ENCODE measurements at regions of chr13 and their contacts with region 1.

Region 1: DNA sequence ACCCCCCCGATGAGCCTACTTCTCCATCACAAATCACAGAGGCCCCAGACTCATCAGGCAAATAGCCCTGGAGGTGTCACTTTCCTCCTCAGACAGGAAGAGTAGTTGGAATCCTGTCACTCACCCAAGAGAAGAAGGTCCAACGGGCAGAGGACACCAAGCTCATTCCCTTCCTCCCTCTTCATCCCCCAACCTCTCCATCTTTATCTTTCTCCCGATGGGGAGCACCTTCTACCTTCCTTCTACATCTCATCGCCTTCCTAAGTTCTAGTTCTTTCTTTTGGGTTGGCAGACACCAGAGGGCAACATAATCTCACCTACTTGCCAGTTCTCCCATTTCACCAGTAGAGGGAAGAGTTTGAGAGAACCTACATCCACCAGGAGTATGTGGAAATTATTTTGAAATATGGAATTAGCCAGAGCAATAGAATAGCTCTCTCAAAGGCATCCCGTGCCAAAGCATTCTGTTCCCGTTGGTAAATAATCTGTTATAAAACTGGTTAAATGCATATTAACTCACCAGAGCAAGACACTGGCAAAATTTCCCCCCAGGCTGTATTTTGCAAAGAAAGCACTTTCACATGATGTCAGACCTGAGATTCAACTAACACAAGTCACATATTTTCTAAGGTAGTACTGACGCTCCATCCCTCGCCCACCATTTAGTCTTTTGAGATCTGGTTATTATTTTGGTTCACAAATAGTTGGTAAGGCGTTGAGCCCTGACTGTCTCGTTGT is 55.0 kb downstream of the ZIC5 start:
- DNase-seq: peak; percentile 23
- H3K4me3 ChIP-seq: no peak overlapping the region
- CTCF ChIP-seq: peak; percentile 92

Region 2: GRCh38 chr13:99898421-99898820 is 18.1 kb before region 1 on chr13:
- CTCF ChIA-PET with region 1: interaction called, 11 read pairs
- POLR2A ChIA-PET with region 1: no interaction called
- DNase-seq: no peak
- H3K4me3 ChIP-seq: no peak overlapping the region
- CTCF ChIP-seq: no peak

Region 3: DNA sequence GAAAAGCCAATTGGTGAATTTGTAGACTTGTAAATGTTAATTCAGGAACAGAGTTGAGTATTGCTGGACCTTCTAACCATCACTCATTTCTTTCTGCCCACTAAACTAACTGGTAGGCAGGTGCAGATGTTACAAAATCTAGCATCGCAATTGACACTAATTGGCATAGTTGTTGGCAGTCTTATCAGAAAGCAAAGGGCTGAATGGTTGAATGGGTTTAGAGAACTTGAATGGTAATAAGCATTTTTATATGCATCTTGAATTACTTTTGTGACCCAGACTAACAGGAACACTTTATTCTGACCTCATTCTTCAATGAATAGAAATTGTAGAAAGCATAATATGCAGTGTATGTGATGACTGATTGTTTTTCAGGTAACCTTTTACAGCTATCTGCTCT is 482.9 kb after region 1 on chr13:
- CTCF ChIA-PET with region 1: no interaction called
- POLR2A ChIA-PET with region 1: no interaction called
- DNase-seq: no peak
- H3K4me3 ChIP-seq: no peak overlapping the region
- CTCF ChIP-seq: no peak

Region 4: DNA sequence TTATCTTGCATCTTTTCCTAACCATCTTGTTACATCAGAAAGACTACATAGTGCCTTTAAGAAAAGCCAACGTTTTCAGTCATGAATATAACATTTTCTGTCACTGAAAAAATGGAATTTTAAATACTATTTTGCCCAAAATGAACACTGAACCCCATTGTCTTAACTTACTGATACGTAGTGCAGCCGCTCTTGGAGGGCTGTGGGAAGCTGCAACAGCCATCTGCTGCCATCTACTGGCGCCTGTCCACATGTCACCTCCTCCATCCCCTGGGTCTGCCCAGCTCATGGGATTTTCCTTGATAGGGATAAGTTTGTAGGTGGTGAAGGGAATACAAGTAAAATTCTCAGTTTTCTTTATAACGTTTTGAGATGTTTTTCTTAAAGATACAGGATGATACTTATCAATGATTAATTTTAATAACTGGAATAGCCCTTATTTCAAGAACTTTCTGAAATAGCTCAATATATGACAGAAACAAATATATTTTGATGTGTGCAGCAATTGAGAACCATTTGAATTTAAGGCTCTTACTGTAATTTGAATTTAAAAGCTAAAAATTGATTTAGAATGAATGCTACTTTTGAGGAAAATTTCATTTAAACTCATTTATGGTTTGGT is 598.4 kb after region 1 on chr13:
- CTCF ChIA-PET with region 1: interaction called, 89 read pairs
- POLR2A ChIA-PET with region 1: no interaction called
- DNase-seq: no peak
- H3K4me3 ChIP-seq: no peak overlapping the region
- CTCF ChIP-seq: peak; percentile 92

Region 5: DNA sequence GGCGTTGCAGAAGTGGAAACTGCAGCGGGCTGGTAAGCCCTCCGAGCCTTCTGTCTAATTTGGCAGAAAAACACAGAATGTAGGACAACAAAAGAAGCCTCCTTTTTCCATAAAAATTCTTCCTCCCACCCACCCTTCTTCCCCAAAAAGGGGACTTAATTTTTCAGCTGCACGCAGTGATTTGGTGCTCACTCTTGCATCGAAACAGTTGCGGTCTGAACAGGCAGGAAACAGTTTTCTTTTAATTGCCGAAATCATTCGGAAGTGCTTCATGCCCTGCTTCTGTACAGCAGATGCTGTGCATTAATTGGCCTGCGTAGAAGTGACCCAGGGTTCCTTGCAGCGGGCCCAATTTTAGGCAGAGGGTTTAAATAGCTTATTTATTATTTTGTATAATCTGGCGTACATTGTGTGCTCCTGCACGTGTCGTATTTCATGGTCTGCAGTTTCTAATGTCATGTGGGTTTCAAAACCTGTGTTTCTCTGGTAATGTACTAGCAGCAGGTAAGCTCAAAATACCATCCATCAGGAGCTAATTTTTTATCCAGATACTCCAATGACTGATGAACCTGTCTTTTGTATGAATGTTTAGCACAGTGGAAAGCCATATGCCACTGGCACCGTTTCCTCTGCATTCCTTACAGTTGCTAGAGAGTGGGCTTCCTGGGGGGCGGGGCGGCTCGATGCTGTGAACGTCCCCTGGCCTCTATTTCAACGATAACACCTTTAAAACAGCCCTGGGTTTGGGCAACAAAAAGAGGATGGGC is 605.5 kb after region 1 on chr13:
- CTCF ChIA-PET with region 1: interaction called, 89 read pairs
- POLR2A ChIA-PET with region 1: no interaction called
- DNase-seq: no peak
- H3K4me3 ChIP-seq: no peak overlapping the region; the same call in 1 of the 2 replicates
- CTCF ChIP-seq: no peak